A673 (cell line): ENCODE measurements at regions of chr1 and their contacts with region 1.

Region 1: GRCh38 chr1:205430696-205431305 is 8.9 kb upstream of the LEMD1 start:
- DNase-seq: peak; percentile 74
- H3K4me3 ChIP-seq: peak overlapping the region; percentile 47
- H3K27ac ChIP-seq: peak overlapping the region; percentile 24
- H3K4me1 ChIP-seq: peaks cover 23% of the 10 kb centered on the region
- H3K27me3 ChIP-seq: no peaks in the 10 kb centered on the region
- CTCF ChIP-seq: peak; percentile 98

Region 2: GRCh38 chr1:205396967-205397616 is 33.7 kb before region 1 on chr1:
- CTCF ChIA-PET with region 1: interaction called, 9 read pairs
- POLR2A ChIA-PET with region 1: no interaction called
- intact Hi-C with region 1: loop called (anchors 5 kb)
- DNase-seq: peak; percentile 88
- H3K4me3 ChIP-seq: no peak overlapping the region
- H3K27ac ChIP-seq: no peak overlapping the region
- H3K4me1 ChIP-seq: peaks cover 20% of the 10 kb centered on the region
- H3K27me3 ChIP-seq: no peaks in the 10 kb centered on the region
- CTCF ChIP-seq: peak; percentile 87

Region 3: GRCh38 chr1:205470131-205470530 is 39.3 kb after region 1 on chr1:
- CTCF ChIA-PET with region 1: interaction called, 16 read pairs
- POLR2A ChIA-PET with region 1: no interaction called
- intact Hi-C with region 1: no loop called
- DNase-seq: no peak
- H3K4me3 ChIP-seq: no peak overlapping the region
- H3K27ac ChIP-seq: no peak overlapping the region
- H3K4me1 ChIP-seq: peaks cover 6% of the 10 kb centered on the region
- H3K27me3 ChIP-seq: no peaks in the 10 kb centered on the region
- CTCF ChIP-seq: no peak